PC-9 (cell line): ENCODE measurements at regions of chr3 and their contacts with region 1.

Region 1: GRCh38 chr3:56997675-56998074 is 62.8 kb upstream of the SPATA12 start:
- DNase-seq: no peak
- H3K4me3 ChIP-seq: no peak overlapping the region
- H3K27ac ChIP-seq: no peak overlapping the region
- H3K4me1 ChIP-seq: no peaks in the 10 kb centered on the region
- H3K27me3 ChIP-seq: no peaks in the 10 kb centered on the region
- CTCF ChIP-seq: no peak

Region 2: DNA sequence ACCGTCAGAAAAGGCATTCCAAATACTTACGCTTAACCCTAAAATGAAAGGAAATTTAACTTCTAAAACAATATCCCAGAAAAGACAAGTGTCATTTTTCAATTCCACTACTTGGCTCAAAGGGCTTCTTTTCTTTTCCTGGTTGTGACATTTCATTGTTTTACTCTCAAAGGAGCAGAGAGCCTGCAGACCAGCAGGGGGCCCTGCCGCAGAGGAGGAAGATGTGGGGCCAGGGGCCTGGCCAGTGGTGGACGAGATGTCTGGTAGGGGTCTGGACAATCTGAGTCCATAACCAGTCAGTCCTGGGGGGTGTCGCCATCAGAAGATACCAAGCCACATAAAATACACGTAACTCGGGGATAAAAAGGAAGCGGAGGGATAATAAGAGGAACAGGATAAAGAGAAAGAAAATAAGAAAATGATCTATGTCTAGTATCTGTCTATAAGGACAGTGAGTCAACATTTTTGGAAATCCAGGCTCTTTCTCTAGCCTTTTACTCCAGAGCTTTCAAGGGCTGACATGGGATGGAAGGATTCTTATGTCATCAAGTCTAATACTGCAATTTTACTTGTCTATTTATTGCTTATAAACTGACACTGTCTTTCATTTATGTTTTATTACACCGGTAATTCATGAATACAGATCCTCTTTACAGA is 141.7 kb before region 1 on chr3:
- CTCF ChIA-PET with region 1: no interaction called
- POLR2A ChIA-PET with region 1: no interaction called
- intact Hi-C with region 1: no loop called
- DNase-seq: no peak
- H3K4me3 ChIP-seq: no peak overlapping the region
- H3K27ac ChIP-seq: no peak overlapping the region
- H3K4me1 ChIP-seq: peaks cover 33% of the 10 kb centered on the region
- H3K27me3 ChIP-seq: no peaks in the 10 kb centered on the region
- CTCF ChIP-seq: peak; percentile 60

Region 3: DNA sequence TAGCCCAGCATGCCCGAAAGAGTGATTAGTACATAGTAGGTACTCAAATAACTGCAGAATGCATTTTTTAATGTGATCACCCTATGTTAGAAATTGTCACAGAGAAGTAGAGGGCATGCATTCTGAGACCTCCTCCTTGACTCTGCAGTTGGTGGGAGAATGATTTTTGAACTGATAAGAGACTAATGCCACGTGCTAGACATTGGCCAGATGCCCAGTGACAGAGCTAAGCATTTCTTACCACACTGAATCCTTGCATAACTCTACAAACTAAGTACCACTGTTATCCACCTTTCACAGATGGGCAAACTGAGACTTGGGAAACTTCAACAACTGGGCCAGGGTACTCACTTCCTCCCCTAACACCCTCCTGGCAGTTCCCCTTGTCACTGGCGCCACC is 29.2 kb after region 1 on chr3:
- CTCF ChIA-PET with region 1: no interaction called
- POLR2A ChIA-PET with region 1: no interaction called
- intact Hi-C with region 1: no loop called
- DNase-seq: no peak
- H3K4me3 ChIP-seq: no peak overlapping the region
- H3K27ac ChIP-seq: no peak overlapping the region
- H3K4me1 ChIP-seq: no peaks in the 10 kb centered on the region
- H3K27me3 ChIP-seq: no peaks in the 10 kb centered on the region
- CTCF ChIP-seq: no peak

Region 4: DNA sequence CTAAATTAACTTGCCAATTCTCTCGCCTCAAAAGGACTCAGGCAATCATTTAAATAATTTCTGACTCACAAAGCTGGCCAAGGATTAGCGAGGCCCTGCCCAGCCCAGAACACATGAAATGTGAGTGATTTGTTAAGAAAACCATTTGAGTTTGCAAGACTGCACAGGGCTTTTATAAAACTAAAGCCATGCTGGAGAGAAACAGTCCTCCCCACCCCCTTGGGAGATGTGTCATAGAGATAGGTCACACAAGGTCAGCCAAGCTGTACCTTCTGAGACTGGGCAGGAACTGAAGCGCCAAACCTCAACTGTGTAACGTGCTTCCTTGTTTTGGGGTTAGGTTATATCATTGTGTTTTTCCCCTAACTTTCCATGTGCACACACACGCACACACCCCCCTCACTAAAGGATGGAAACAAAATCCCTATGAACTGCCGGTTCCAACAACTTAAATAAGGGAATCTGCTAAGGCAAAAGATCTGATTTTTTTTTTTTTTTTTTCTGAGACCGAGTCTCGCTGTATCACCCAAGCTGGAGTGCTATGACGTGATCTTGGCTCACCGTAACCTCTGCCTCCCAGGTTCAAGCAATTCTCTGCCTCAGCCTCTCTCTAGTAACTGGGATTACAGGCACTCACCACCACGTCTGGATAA is 70.9 kb after region 1 on chr3:
- CTCF ChIA-PET with region 1: no interaction called
- POLR2A ChIA-PET with region 1: no interaction called
- intact Hi-C with region 1: loop called (anchors 1 kb)
- DNase-seq: peak; percentile 78 to 97
- H3K4me3 ChIP-seq: peak overlapping the region; percentile 38; the same call in 1 of the 2 replicates
- H3K27ac ChIP-seq: peak overlapping the region; percentile 91
- H3K4me1 ChIP-seq: peaks cover 60% of the 10 kb centered on the region
- H3K27me3 ChIP-seq: no peaks in the 10 kb centered on the region
- CTCF ChIP-seq: no peak

Region 5: GRCh38 chr3:57770009-57770827 is 772.5 kb after region 1 on chr3:
- CTCF ChIA-PET with region 1: no interaction called
- POLR2A ChIA-PET with region 1: interaction called, 19 read pairs
- intact Hi-C with region 1: no loop called
- DNase-seq: no peak
- H3K4me3 ChIP-seq: no peak overlapping the region
- H3K27ac ChIP-seq: 0 out of 2 replicates have a peak overlapping the region, but pooled peaks have one; percentile 0
- H3K4me1 ChIP-seq: no peaks in the 10 kb centered on the region
- H3K27me3 ChIP-seq: no peaks in the 10 kb centered on the region
- CTCF ChIP-seq: no peak